ENCODE measurements at regions of chr1 and their contacts with region 1.

Region 1: GRCh38 chr1:116769561-116769977 is 15.3 kb downstream of the CD2 start:
- DNase-seq: peak; percentile 77
- H3K4me3 Mint-ChIP-seq: peak overlapping the region; percentile 84
- H3K27ac Mint-ChIP-seq: peak overlapping the region; percentile 100
- H3K4me1 Mint-ChIP-seq: peaks cover 90% of the 10 kb centered on the region
- H3K27me3 Mint-ChIP-seq: peaks cover under 1% of the 10 kb centered on the region

Region 2: DNA sequence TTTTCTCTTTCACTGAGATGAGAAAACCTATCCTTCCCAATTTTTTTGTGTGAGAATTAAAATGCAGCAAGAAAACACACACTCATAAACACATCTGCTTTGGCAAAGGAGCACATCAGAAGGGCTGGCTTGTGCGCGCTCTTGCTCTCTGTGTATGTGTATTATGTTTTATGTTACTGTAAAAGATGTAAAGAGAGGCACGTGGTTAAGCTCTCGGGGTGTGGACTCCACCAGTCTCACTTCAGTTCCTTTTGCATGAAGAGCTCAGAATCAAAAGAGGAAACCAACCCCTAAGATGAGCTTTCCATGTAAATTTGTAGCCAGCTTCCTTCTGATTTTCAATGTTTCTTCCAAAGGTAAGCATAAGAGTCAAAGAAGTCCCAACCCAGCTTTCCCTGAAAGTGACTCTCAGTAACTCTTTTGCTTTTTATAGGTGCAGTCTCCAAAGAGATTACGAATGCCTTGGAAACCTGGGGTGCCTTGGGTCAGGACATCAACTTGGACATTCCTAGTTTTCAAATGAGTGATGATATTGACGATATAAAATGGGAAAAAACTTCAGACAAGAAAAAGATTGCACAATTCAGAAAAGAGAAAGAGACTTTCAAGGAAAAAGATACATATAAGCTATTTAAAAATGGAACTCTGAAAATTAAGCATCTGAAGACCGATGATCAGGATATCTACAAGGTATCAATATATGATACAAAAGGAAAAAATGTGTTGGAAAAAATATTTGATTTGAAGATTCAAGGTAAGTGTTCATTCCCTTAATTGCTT is 15.2 kb before region 1 on chr1 and contains the start of gene CD2:
- intact Hi-C with region 1: loop called (anchors 2 kb)
- DNase-seq: peak; percentile 61
- H3K4me3 Mint-ChIP-seq: peak within 1 kb of the TSS; percentile 97
- H3K27ac Mint-ChIP-seq: peak within 1 kb of the TSS; percentile 97
- H3K4me1 Mint-ChIP-seq: peaks cover 46% of the 10 kb centered on the region
- H3K27me3 Mint-ChIP-seq: no peaks in the 10 kb centered on the region
- total RNA-seq, gene CD2: 651 and 685 TPM in 2 replicates

Region 3: DNA sequence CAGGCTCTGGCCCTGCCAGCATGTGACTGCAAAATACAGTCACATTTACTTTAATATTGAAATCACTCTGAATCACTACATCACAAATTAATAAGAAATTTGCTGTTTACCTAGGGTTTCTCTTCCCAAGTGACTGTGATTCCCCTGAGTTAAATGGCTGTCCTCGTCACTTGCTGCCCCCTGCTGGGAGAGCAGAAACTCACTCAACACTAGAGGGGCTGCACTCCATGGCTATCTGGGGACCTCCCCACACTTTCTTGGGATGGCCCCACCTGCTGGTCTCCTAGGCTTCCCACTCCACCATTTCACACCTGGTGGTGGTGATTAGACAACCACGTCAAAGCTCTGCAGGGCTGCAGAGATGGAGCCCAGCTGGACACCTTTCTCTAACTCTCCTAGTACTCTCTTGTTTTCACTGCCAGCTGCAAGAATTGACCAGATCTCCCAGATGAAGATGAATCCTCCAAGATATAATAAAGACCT is 48.1 kb after region 1 on chr1:
- intact Hi-C with region 1: loop called (anchors 1 kb)
- DNase-seq: peak; percentile 55
- H3K4me3 Mint-ChIP-seq: peak overlapping the region; percentile 56
- H3K27ac Mint-ChIP-seq: peak overlapping the region; percentile 56
- H3K4me1 Mint-ChIP-seq: peaks cover 59% of the 10 kb centered on the region
- H3K27me3 Mint-ChIP-seq: no peaks in the 10 kb centered on the region

Region 4: GRCh38 chr1:116873680-116874271 is 104.2 kb after region 1 on chr1:
- intact Hi-C with region 1: loop called (anchors 1 kb)
- DNase-seq: no peak
- H3K4me3 Mint-ChIP-seq: peak overlapping the region; percentile 3
- H3K27ac Mint-ChIP-seq: peak overlapping the region; percentile 13
- H3K4me1 Mint-ChIP-seq: peaks cover 19% of the 10 kb centered on the region
- H3K27me3 Mint-ChIP-seq: no peaks in the 10 kb centered on the region

Region 5: DNA sequence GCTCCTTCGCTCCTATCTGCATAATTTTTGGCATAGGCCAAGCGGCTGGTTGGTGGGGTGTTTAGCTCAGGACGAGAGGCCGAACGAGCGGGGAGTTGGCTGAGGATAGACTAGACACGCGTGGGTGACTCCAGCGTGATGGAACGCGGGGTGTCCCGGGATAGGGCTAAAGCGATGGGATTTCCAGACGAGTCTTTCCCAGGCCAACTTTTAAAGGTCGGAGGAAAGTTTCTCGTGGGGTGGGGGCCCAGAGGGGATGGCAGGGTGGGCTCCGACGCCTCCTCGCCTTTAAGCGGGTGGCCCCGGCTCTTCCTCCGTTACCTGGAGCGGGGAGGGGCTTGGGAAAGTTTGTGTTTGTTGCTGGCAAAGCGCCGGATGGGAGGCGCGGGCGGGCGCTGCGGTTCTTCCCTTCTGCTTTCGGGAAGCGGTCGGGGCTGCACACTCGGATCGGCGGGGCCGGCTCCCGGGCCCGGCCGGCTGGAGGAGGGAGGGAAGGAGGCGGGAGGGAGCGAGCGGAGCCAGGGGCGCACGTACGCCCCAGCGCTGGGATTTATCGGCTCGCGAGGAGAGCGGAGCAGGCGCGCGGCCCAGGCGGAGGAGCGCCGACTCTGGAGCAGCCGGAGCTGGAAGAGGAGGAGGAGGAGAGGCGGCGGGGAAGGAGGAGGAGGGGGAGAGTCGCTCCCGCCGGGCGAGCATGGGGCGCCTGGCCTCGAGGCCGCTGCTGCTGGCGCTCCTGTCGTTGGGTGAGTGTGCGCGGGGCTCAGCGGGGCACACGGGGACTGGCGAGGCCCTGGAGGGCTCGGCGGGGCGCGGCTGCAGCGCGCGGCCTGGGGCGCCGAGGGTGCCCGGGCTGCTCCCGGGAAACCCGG is 140.2 kb after region 1 on chr1 and contains the start of gene PTGFRN:
- intact Hi-C with region 1: loop called (anchors 1 kb)
- DNase-seq: no peak
- H3K4me3 Mint-ChIP-seq: peak within 1 kb of the TSS; percentile 87
- H3K27ac Mint-ChIP-seq: peak within 1 kb of the TSS; percentile 75
- H3K4me1 Mint-ChIP-seq: peaks cover 9% of the 10 kb centered on the region
- H3K27me3 Mint-ChIP-seq: peaks cover 4% of the 10 kb centered on the region
- total RNA-seq, gene PTGFRN: 38.0 and 43.4 TPM in 2 replicates